SK-N-SH (cell line): ENCODE measurements at regions of chr3 and their contacts with region 1.

Region 1: GRCh38 chr3:186259612-186260383 is 102.2 kb downstream of the DGKG start:
- DNase-seq: peak; percentile 90
- H3K4me3 ChIP-seq: peak overlapping the region in 1 of 2 experiments; percentile 17; a peak in 1 of 4 replicates
- H3K27ac ChIP-seq: peak overlapping the region in 1 of 2 experiments; percentile 55; a peak in 1 of 4 replicates
- H3K4me1 ChIP-seq: peaks cover 0 to 11% of the 10 kb centered on the region in 2 experiments; a peak in 1 of 4 replicates
- H3K27me3 ChIP-seq: no peaks in the 10 kb centered on the region; the same call in 1 of the 2 replicates
- CTCF ChIP-seq: peak; percentile 80
- EP300 ChIP-seq: no peak
- RAD21 ChIP-seq: peak; percentile 88

Region 2: GRCh38 chr3:185983495-185984141 is 276.2 kb before region 1 on chr3:
- CTCF ChIA-PET with region 1: interaction called, 24 read pairs
- POLR2A ChIA-PET with region 1: no interaction called
- DNase-seq: peak; percentile 83
- H3K4me3 ChIP-seq: peak overlapping the region in 1 of 2 experiments; percentile 21; a peak in 1 of 4 replicates
- H3K27ac ChIP-seq: no peak overlapping the region
- H3K4me1 ChIP-seq: peaks cover 0 to 3% of the 10 kb centered on the region in 2 experiments; a peak in 1 of 4 replicates
- H3K27me3 ChIP-seq: no peaks in the 10 kb centered on the region
- CTCF ChIP-seq: peak; percentile 90
- EP300 ChIP-seq: no peak
- RAD21 ChIP-seq: peak; percentile 98

Region 3: DNA sequence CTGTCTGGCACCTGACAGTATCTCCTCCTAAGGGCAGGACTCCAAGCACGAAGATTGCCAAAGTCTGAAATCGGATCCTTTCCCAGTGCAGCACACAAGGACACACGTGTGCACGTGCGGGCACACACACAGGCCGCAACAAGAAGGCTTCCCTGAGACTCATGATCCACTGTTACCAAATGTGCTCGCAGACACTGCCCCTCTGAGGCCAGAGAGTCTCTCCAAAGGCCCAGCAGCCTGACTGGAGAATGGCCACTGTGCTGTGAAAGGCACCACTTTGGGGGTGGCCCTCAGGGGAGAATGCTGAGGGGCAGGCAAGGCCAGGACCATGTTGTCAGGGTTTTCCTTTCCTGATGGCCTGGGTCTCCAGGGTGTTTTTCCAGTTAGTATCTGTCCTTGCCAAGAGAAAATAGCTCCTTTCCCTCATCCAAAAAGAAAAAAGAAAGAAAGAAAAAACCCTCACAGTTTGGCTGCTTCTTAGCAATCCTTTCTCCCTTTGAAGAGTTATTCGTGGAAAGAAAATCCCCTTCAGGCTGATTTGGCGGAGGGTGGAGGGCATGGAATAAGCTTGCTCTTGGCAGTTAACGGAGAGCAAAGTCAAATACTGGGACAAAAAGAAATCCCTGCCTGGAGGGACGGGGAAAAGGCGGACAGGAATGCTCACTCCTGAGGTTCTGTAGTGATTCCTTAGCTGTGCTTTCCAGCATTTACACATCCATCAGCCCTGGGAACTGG is 38.7 kb before region 1 on chr3:
- CTCF ChIA-PET with region 1: interaction called, 11 read pairs
- POLR2A ChIA-PET with region 1: no interaction called
- DNase-seq: no peak
- H3K4me3 ChIP-seq: no peak overlapping the region
- H3K27ac ChIP-seq: no peak overlapping the region
- H3K4me1 ChIP-seq: no peaks in the 10 kb centered on the region
- H3K27me3 ChIP-seq: peaks cover 7% of the 10 kb centered on the region; the same call in 1 of the 2 replicates
- CTCF ChIP-seq: no peak
- EP300 ChIP-seq: no peak
- RAD21 ChIP-seq: peak; percentile 36

Region 4: DNA sequence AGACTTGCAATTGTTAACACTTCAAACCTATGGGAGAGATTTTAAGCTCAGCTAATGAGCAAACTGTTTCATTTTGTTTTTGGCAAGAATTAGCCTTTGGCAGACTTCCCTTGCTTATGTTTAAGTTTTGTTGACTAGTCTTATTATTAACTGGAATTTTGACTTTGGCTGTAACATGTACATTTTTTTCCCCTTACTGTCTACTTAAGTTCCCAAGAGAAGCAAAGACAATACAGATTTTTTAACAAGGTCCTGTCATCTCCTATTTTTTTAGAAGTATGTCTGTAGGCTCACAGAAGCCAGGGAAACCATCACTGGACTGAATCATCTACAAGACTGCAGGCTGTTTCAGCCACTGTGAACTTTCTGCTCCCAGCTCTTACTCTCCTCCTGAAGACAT is 27.9 kb after region 1 on chr3:
- CTCF ChIA-PET with region 1: interaction called, 12 read pairs
- POLR2A ChIA-PET with region 1: no interaction called
- DNase-seq: no peak
- H3K4me3 ChIP-seq: no peak overlapping the region
- H3K27ac ChIP-seq: peak overlapping the region in 1 of 2 experiments; percentile 56; a peak in 2 of 4 replicates
- H3K4me1 ChIP-seq: no peaks in the 10 kb centered on the region; a peak in 1 of 4 replicates
- H3K27me3 ChIP-seq: no peaks in the 10 kb centered on the region
- CTCF ChIP-seq: no peak
- EP300 ChIP-seq: no peak
- RAD21 ChIP-seq: no peak

Region 5: DNA sequence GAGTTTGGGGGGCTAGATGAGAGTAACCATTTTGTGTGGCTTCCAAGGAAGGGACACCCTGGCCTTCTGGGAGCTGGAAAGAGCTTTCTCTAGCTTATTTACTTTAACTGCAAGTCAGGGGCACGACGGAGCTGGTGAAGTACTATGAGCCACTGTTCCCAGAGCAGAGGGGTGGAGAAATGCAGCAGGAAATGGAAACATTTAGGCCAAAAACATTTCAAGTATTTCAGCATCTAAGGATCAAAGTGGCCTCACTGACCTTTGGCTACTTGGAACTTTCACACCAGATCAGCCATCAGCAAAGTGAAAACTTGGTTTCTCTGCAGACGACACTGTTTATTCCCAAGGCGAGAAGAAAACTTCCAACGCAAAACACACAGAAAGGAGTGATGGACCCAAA is 94.3 kb after region 1 on chr3:
- CTCF ChIA-PET with region 1: no interaction called
- POLR2A ChIA-PET with region 1: no interaction called
- DNase-seq: no peak
- H3K4me3 ChIP-seq: no peak overlapping the region
- H3K27ac ChIP-seq: no peak overlapping the region
- H3K4me1 ChIP-seq: no peaks in the 10 kb centered on the region
- H3K27me3 ChIP-seq: no peaks in the 10 kb centered on the region
- CTCF ChIP-seq: no peak
- EP300 ChIP-seq: no peak
- RAD21 ChIP-seq: no peak